Natural killer cell (primary cell): ENCODE measurements at regions of chr6 and their contacts with region 1.

Region 1: GRCh38 chr6:133973109-133973971 is 20.3 kb downstream of the TBPL1 start:
- DNase-seq: peak in 1 of 2 donors; percentile 74
- ATAC-seq: peak in 2 of 3 donors; percentile 71 to 74
- H3K4me3 ChIP-seq: no peak overlapping the region
- H3K4me3 Mint-ChIP-seq: no peak overlapping the region
- H3K27ac ChIP-seq: no peak overlapping the region
- H3K27ac Mint-ChIP-seq: peak overlapping the region; percentile 18 to 47
- H3K4me1 ChIP-seq: peaks cover 5% of the 10 kb centered on the region
- H3K4me1 Mint-ChIP-seq: peaks cover 41 to 42% of the 10 kb centered on the region in 2 donors
- H3K27me3 ChIP-seq: no peaks in the 10 kb centered on the region
- H3K27me3 Mint-ChIP-seq: no peaks in the 10 kb centered on the region
- CTCF ChIP-seq: peak; percentile 73

Region 2: DNA sequence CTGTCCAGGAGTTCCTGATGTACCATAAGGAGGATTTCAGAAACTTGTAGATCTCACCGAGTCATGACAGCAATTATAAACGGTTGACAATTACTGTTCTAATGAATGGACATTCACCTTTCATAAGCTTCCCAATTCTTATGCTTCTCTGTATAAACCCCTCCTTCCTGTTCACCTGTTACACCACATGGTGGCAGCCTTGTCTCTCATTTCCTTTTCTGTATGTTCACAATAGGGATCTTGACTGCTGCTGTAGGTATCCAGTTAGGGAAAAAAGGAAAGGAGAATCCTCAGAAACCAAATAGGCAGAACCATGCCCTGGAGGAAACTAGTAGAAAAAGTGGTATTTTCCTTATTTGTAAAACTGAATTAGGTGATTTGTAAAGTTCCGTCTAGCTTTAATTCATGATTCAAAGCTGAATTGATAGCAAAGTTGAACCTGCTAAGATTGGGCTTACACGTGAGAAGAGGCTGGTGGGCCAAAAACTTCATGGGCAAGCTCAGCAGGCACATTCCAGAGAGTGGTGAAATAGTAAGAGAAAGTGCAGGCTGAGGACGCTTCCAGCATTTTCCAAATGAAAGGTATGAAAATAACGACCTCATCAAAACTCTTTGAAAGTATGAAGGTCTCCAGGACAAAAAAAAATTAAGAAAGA is 49.3 kb before region 1 on chr6:
- intact Hi-C with region 1: loop called (anchors 2 kb)
- DNase-seq: peak in 1 of 2 donors; percentile 84
- ATAC-seq: peak; percentile 75 to 93 (median 88)
- H3K4me3 ChIP-seq: no peak overlapping the region
- H3K4me3 Mint-ChIP-seq: no peak overlapping the region
- H3K27ac ChIP-seq: no peak overlapping the region
- H3K27ac Mint-ChIP-seq: no peak overlapping the region
- H3K4me1 ChIP-seq: no peaks in the 10 kb centered on the region
- H3K4me1 Mint-ChIP-seq: no peaks in the 10 kb centered on the region
- H3K27me3 ChIP-seq: peaks cover 14% of the 10 kb centered on the region
- H3K27me3 Mint-ChIP-seq: peaks cover 22 to 49% of the 10 kb centered on the region in 2 donors
- CTCF ChIP-seq: peak; percentile 87

Region 3: DNA sequence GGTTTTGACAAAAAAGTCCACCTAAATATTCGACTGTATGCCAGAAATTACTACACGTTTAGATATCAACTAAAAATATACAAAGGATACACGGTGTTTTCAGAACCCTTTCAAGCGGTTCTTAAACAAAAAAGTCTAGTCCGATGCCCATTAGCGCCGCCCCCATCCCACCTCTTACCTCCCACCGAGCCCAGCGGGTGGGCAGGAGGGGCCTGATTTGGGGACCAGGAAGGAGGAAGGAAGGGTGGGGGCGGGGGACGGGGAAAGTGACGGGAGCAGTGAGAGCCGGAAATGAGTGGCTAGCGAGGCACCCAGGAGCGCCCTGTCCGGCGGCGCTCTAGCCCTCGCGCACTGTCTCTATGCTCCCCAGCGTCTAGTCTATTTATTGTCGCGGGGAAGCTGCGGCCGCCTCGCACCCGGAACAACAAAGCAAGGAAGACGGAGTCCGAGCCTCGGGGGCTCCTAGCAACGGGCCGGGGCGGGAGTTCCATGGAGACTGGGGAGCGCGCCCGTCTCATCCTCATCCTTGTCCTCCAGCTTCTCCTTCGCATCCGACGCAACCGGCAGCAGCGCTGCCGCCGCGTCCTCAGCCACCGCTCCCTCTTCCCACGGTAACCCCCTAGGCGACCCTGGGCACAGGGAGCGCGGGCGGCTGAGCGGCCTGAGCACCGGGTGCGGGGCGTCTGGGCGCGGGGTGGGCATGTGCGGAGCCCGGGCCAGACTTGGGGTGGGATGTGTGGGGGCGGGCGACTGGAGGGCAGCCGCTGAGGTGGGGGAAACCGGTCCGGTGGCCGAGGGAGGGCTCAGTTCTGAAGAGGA is 20.3 kb before region 1 on chr6 and contains the start of gene TBPL1:
- intact Hi-C with region 1: loop called (anchors 2 kb)
- DNase-seq: peak; percentile 77 to 96
- ATAC-seq: peak; percentile 83 to 96 (median 91)
- H3K4me3 ChIP-seq: peak within 1 kb of the TSS; percentile 69
- H3K4me3 Mint-ChIP-seq: peak within 1 kb of the TSS; percentile 97
- H3K27ac ChIP-seq: peak within 1 kb of the TSS; percentile 73
- H3K27ac Mint-ChIP-seq: peak within 1 kb of the TSS; percentile 94 to 95
- H3K4me1 ChIP-seq: peaks cover 8% of the 10 kb centered on the region
- H3K4me1 Mint-ChIP-seq: peaks cover 52 to 60% of the 10 kb centered on the region in 2 donors
- H3K27me3 ChIP-seq: no peaks in the 10 kb centered on the region
- H3K27me3 Mint-ChIP-seq: no peaks in the 10 kb centered on the region
- CTCF ChIP-seq: no peak
- total RNA-seq, gene TBPL1: 54.8 to 71.0 (median 59.9) TPM

Region 4: DNA sequence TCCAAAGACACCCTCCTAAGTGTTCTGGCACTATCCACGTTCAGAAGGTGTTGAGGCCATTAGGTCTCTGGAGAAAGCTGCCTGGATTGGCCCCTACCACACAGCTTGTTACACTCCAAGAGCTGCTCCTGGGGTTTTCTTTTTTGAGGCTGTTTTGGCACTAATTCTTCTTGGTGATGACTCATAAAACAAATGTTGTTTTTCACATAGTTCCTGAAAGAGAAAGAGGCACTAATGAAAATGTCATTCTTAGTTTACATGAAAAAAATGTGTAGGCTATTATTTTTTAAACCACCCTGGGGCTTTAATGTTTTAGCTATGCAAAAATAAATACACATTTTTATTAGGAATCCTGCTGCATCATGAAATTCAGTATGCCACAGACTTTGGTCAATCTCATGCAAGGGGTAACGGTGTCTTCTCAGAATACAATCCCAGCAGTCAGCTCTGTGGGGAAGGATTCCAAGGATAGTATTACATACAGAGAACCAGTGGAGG is 17.8 kb after region 1 on chr6:
- intact Hi-C with region 1: no loop called
- DNase-seq: no peak
- ATAC-seq: no peak
- H3K4me3 ChIP-seq: no peak overlapping the region
- H3K4me3 Mint-ChIP-seq: no peak overlapping the region
- H3K27ac ChIP-seq: no peak overlapping the region
- H3K27ac Mint-ChIP-seq: no peak overlapping the region
- H3K4me1 ChIP-seq: no peaks in the 10 kb centered on the region
- H3K4me1 Mint-ChIP-seq: peaks cover 4% of the 10 kb centered on the region in 2 donors
- H3K27me3 ChIP-seq: no peaks in the 10 kb centered on the region
- H3K27me3 Mint-ChIP-seq: no peaks in the 10 kb centered on the region
- CTCF ChIP-seq: no peak

Region 5: GRCh38 chr6:134063966-134064445 is 90.7 kb after region 1 on chr6:
- intact Hi-C with region 1: loop called (anchors 1 kb)
- DNase-seq: peak; percentile 22 to 78
- ATAC-seq: peak; percentile 77 to 98 (median 92)
- H3K4me3 ChIP-seq: no peak overlapping the region
- H3K4me3 Mint-ChIP-seq: no peak overlapping the region
- H3K27ac ChIP-seq: no peak overlapping the region
- H3K27ac Mint-ChIP-seq: no peak overlapping the region
- H3K4me1 ChIP-seq: no peaks in the 10 kb centered on the region
- H3K4me1 Mint-ChIP-seq: no peaks in the 10 kb centered on the region
- H3K27me3 ChIP-seq: no peaks in the 10 kb centered on the region
- H3K27me3 Mint-ChIP-seq: peaks cover 0 to 7% of the 10 kb centered on the region in 2 donors
- CTCF ChIP-seq: peak; percentile 73

Region 6: GRCh38 chr6:134097114-134097707 is 123.9 kb after region 1 on chr6:
- intact Hi-C with region 1: loop called (anchors 1 kb)
- DNase-seq: peak; percentile 40 to 84
- ATAC-seq: peak in 2 of 3 donors; percentile 59 to 63
- H3K4me3 ChIP-seq: no peak overlapping the region
- H3K4me3 Mint-ChIP-seq: no peak overlapping the region
- H3K27ac ChIP-seq: no peak overlapping the region
- H3K27ac Mint-ChIP-seq: no peak overlapping the region
- H3K4me1 ChIP-seq: no peaks in the 10 kb centered on the region
- H3K4me1 Mint-ChIP-seq: no peaks in the 10 kb centered on the region
- H3K27me3 ChIP-seq: peaks cover 2% of the 10 kb centered on the region
- H3K27me3 Mint-ChIP-seq: peaks cover 17 to 36% of the 10 kb centered on the region in 2 donors
- CTCF ChIP-seq: peak; percentile 70